Activated T-helper 1 cell treated with anti-CD3 and anti-CD28 coated beads, Interleukin-12 subunit alpha, Interleukin-12 subunit beta, Interleukin-2, Interleukin-4 antibody, amounts not matched to agents 30 ng/mL and 10 ng/mL and 1 ng/mL, durations not matched to agents 14 hours and 24 hours and 36 hours (primary cell): ENCODE measurements at regions of chr7 and their contacts with region 1.

Region 1: GRCh38 chr7:107725151-107725740 is 18.7 kb upstream of the CBLL1 start:
- DNase-seq: peak; percentile 25
- H3K4me3 Mint-ChIP-seq: no peak overlapping the region
- H3K27ac Mint-ChIP-seq: no peak overlapping the region
- H3K4me1 Mint-ChIP-seq: no peaks in the 10 kb centered on the region
- H3K27me3 Mint-ChIP-seq: peaks cover 16% of the 10 kb centered on the region

Region 2: GRCh38 chr7:107201795-107202450 is 523.3 kb before region 1 on chr7:
- intact Hi-C with region 1: loop called (anchors 5 kb)
- DNase-seq: no peak
- H3K4me3 Mint-ChIP-seq: no peak overlapping the region
- H3K27ac Mint-ChIP-seq: no peak overlapping the region
- H3K4me1 Mint-ChIP-seq: no peaks in the 10 kb centered on the region
- H3K27me3 Mint-ChIP-seq: no peaks in the 10 kb centered on the region

Region 3: DNA sequence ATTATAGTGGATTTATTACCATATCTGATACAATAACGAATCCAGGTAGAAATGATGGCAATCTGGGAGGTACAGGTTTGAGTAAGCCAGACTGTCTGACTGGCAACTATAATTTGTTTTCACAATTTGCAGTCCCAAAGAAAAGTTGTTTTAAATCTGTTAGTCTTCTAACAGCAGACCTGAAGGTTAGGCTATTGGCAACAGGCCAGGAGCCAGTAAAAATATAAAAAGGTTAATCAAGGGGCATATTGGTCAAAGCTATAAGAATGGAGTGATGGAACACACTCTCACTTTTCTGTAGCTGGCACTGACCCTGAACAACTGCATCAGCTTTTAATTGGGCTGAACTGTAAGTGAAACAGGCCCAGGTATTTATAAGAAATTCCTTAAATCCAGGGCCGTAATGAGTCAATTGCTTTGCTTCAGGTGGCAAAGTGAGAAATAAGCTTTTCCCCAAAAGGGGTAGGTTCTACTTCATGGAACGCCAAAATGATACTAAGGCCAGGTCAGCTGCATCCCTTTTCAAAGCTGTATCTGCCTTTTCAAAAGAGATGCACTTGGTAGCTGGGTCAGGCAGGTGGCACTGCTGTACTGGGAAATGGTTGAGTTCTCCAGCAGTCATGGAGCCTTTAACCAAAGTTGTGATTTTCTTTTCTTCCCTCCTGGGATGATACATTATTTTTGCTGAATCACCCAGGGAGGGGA is 262.4 kb before region 1 on chr7:
- intact Hi-C with region 1: loop called (anchors 1 kb)
- DNase-seq: peak; percentile 7
- H3K4me3 Mint-ChIP-seq: no peak overlapping the region
- H3K27ac Mint-ChIP-seq: no peak overlapping the region
- H3K4me1 Mint-ChIP-seq: no peaks in the 10 kb centered on the region
- H3K27me3 Mint-ChIP-seq: no peaks in the 10 kb centered on the region

Region 4: DNA sequence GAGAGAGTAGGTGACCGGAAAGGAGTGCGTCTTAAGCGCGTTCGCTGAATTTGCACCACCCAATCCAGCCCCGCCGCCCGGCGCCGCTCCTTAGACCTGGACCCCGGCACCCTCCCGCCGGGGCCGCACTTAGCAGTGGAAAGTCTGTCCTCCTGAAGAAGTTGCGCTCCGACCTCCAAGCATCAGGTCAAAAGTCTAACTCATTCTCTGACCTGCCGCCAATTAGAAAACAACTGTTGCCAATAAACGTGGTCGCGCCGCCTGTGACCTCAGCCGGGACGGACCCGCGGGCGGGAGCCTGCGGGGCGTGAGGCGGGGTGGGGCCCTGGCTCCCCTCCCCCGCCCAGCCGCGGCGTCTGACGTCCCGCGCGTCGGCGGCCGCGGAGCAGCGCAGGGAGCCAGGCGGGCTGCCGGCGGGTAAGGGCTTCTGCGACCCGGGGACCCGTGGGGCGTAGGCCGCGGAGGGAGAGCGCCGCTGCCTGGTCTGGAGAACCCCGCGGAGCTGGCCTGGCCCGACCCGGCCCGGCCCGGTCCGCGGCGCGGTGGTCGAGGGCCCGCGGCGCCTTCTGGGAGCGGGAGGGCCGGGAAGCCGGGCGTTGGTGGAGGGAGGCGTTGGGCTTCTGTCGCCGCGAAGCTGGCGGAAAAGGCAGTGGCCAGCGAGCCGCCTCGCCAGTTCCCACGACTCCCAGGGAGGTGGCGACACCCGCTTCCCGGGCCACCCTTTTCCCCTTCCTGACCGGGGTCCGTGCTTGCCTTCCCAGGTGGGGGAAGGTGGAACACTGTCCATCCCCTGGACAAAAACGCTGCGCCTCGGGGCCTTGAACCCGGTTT is 145.1 kb before region 1 on chr7 and contains the start of gene BCAP29:
- intact Hi-C with region 1: loop called (anchors 1 kb)
- DNase-seq: peak; percentile 65
- H3K4me3 Mint-ChIP-seq: peak within 1 kb of the TSS; percentile 89
- H3K27ac Mint-ChIP-seq: peak within 1 kb of the TSS; percentile 86
- H3K4me1 Mint-ChIP-seq: peaks cover 26% of the 10 kb centered on the region
- H3K27me3 Mint-ChIP-seq: no peaks in the 10 kb centered on the region
- total RNA-seq, gene BCAP29: 43.5 and 44.5 TPM in 2 replicates